ENCODE measurements at regions of chr5 and their contacts with region 1.

Region 1: DNA sequence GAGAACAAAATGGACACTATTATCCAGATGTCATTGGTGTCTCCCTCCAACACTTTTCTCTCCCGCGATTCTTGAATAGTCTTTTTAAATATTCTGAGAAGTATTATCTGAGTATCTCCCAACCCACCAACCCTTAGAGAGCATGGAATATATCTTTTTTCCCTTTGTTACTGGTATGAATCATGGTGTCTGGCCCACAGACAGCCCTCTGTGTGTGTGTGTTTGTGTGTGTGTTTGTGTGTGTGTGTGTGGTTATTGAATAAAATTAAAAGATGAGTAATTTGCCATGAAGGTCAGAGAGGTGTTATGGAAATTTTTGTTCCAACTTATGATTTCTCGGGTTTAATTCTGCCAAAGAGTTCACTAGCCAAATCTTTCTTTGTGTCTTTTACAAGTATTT is 47.7 kb downstream of the CAMK4 start:
- DNase-seq: no peak
- H3K4me3 ChIP-seq: no peak overlapping the region
- H3K27ac ChIP-seq: no peak overlapping the region
- H3K4me1 ChIP-seq: no peaks in the 10 kb centered on the region
- H3K27me3 ChIP-seq: no peaks in the 10 kb centered on the region
- CTCF ChIP-seq: no peak
- POLR2A ChIP-seq: no peak

Region 2: DNA sequence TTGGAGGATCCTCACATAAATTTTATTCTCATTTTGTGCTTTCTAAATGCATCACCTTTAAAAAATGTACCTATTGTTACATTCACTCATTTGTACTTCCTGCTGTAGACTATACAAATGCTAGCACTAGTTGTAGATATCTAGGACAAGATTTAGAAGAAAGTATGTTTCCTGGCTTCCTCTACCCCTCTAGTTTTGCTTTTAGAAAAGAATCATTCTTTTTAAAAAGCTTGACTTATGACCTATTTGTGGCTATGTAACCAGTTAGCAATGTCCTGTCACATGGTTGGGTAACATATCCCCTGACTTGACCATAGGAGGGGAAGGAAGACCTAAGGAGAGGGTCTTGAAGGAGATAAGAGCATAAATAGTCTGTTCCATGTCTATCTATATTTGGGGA is 34.4 kb before region 1 on chr5:
- CTCF ChIA-PET with region 1: no interaction called
- POLR2A ChIA-PET with region 1: no interaction called
- dilution Hi-C with region 1: no loop called
- intact Hi-C with region 1: loop called (anchors 1 kb)
- DNase-seq: peak; percentile 16
- H3K4me3 ChIP-seq: no peak overlapping the region
- H3K27ac ChIP-seq: no peak overlapping the region
- H3K4me1 ChIP-seq: peaks cover 12% of the 10 kb centered on the region
- H3K27me3 ChIP-seq: no peaks in the 10 kb centered on the region
- CTCF ChIP-seq: no peak
- POLR2A ChIP-seq: no peak

Region 3: DNA sequence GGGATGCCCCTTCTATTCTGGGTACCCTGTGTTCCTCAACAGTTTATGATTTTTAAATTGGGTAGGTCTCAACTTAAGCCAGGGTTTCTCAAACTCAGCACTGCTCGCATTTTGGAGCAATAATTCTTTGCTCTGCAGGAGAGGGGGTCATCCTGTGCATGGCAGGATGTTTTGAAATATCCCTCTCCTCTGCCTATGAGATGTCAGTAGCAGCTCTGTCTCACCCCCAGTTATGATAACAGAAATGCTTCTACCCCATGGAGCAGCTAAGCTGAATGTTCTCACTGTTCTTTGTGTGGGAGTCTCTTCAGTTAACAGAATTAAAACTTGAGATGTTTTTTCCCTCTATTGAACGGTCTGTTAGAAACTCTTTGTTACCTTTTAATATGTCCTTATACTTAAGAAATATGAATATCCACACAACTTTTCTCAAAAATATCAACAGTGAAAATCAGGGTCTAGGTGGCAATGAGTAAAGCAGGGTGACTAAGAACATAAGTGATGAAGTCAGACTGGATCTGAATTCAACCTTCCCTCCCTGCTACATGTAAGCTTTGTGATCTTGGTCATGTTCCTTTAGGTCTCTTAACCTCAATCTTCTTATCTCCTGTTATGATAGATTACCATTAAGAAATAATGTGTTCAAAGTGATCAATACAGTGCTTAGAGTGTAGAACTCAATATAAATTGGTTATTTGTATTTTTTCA is 41.3 kb after region 1 on chr5:
- CTCF ChIA-PET with region 1: no interaction called
- POLR2A ChIA-PET with region 1: no interaction called
- dilution Hi-C with region 1: no loop called
- intact Hi-C with region 1: no loop called
- DNase-seq: no peak
- H3K4me3 ChIP-seq: no peak overlapping the region
- H3K27ac ChIP-seq: no peak overlapping the region
- H3K4me1 ChIP-seq: no peaks in the 10 kb centered on the region
- H3K27me3 ChIP-seq: no peaks in the 10 kb centered on the region
- CTCF ChIP-seq: no peak
- POLR2A ChIP-seq: no peak

Region 4: DNA sequence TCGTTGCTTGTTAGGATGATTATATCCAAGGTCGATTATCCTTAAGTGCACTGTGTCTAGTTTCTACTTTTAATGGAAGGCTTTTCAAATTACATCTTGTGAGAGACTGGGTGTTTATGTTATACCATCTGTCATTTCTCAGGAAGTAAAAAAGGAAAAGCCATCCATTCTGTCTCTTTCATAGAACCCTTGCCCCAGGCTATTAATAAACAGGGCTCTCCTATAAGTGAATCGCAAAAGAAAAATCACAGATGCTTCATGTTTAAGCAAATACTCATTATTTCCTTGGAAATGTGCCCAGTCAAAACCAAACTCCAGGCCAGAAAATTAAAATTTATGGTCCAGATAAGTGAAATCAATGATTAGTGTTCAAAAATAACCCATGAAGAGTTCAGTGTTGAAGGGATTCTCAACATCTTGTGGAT is 182.3 kb after region 1 on chr5:
- CTCF ChIA-PET with region 1: no interaction called
- POLR2A ChIA-PET with region 1: no interaction called
- dilution Hi-C with region 1: no loop called
- intact Hi-C with region 1: no loop called
- DNase-seq: no peak
- H3K4me3 ChIP-seq: no peak overlapping the region
- H3K27ac ChIP-seq: no peak overlapping the region
- H3K4me1 ChIP-seq: no peaks in the 10 kb centered on the region
- H3K27me3 ChIP-seq: no peaks in the 10 kb centered on the region
- CTCF ChIP-seq: no peak
- POLR2A ChIP-seq: no peak

Measured in endothelial cell of umbilical vein (primary cell).